ENCODE measurements at regions of chr6 and their contacts with region 1.

Region 1: GRCh38 chr6:121222656-121223055 is 111.6 kb downstream of the TBC1D32 start:
- DNase-seq: peak in 1 of 2 experiments; percentile 32
- H3K4me3 ChIP-seq: no peak overlapping the region
- H3K4me1 ChIP-seq: no peaks in the 10 kb centered on the region
- H3K27me3 ChIP-seq: no peaks in the 10 kb centered on the region

Region 2: DNA sequence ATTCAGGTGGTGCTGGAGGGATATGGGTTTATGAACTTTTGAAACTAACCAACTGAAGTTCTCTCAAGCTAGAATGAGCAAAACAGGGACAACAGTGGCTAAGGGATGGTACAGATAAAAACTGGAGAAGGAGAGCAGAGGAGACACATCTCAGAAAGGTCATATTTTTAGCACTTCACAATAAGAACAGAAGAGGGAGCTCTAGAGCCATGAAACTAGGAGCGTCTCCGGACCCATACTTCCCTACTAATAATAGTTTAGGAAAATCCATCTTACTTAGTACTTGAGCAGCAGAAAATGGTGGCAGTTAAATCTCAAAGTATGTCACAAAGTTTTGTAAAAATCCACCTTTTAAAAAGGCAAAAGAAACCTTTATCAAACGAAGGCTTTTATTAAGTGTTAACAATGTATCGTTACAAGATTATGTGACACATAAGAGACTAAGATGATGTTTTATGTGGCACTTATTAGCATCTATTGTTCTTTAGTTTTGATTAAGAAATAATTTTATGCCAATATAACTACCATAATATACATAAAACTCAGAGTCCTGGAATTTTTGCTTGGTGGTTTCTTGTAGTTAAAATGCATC is 167.0 kb before region 1 on chr6:
- in situ Hi-C with region 1: loop called (anchors 25 kb)
- DNase-seq: peak; percentile 10 to 38
- H3K4me3 ChIP-seq: no peak overlapping the region
- H3K4me1 ChIP-seq: no peaks in the 10 kb centered on the region
- H3K27me3 ChIP-seq: no peaks in the 10 kb centered on the region